ENCODE measurements at regions of chr6 and their contacts with region 1.

Region 1: DNA sequence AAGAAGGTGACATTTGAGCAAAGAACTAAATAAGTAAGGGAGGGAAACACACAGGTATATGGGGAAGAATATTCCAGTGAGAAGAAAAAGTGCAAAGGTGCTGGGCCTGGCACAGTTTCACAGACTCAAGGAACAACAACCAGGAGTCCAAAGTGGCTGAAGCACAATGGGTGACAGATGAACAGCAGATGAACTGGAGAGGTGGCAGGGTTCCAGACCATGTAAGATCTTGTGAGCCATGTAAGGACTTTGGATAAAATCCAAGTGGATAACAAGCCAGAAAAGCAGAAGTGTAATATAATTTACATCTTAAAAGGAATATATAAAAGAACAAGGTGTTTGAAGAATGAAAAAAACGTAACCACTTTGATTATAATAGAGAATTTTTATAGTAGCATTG is 87.9 kb downstream of the MMS22L start:
- DNase-seq: no peak
- ATAC-seq: no peak
- H3K4me3 ChIP-seq: no peak overlapping the region
- H3K27ac ChIP-seq: no peak overlapping the region
- H3K4me1 ChIP-seq: no peaks in the 10 kb centered on the region
- H3K27me3 ChIP-seq: no peaks in the 10 kb centered on the region
- CTCF ChIP-seq: no peak
- POLR2A ChIP-seq: no peak

Region 2: GRCh38 chr6:97040355-97040860 is 154.7 kb before region 1 on chr6:
- intact Hi-C with region 1: no loop called
- DNase-seq: no peak
- ATAC-seq: no peak
- H3K4me3 ChIP-seq: no peak overlapping the region
- H3K27ac ChIP-seq: no peak overlapping the region
- H3K4me1 ChIP-seq: no peaks in the 10 kb centered on the region
- H3K27me3 ChIP-seq: no peaks in the 10 kb centered on the region
- CTCF ChIP-seq: no peak
- POLR2A ChIP-seq: no peak

Region 3: GRCh38 chr6:97312245-97312644 is 117.1 kb after region 1 on chr6:
- intact Hi-C with region 1: no loop called
- DNase-seq: no peak
- ATAC-seq: no peak
- H3K4me3 ChIP-seq: no peak overlapping the region
- H3K27ac ChIP-seq: no peak overlapping the region
- H3K4me1 ChIP-seq: no peaks in the 10 kb centered on the region
- H3K27me3 ChIP-seq: no peaks in the 10 kb centered on the region
- CTCF ChIP-seq: no peak
- POLR2A ChIP-seq: no peak

Region 4: DNA sequence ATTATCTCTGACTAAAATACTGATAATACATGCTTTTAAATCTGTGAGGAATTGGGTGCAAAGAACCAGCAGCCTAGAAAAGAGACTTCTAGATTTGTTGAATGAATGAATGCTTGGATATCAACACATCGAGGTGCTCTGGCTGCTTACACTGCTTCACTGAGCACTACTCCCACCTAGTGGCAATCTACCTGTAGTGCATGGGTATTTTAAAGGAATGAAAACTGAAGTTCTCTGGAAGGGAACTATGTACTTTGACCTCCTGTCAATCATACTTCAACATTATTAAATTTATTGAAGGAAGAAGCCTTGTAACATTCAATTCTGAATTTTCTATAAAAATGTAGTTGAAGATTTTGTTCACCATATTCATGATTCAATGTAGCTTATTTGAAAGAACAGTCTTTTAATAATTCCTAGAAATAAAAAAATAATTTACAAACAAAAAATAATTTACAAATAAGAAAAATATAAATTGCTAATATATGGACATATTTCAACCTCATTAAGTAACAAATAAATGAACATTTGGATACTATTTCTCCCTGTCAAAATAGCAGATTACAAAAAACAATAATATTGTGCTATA is 199.1 kb after region 1 on chr6:
- intact Hi-C with region 1: loop called in 1 of 2 experiments (anchors 10 kb)
- DNase-seq: peak in 1 of 3 donors; percentile 44
- ATAC-seq: peak; percentile 91 to 96 (median 94)
- H3K4me3 ChIP-seq: no peak overlapping the region
- H3K27ac ChIP-seq: no peak overlapping the region
- H3K4me1 ChIP-seq: no peaks in the 10 kb centered on the region
- H3K27me3 ChIP-seq: no peaks in the 10 kb centered on the region
- CTCF ChIP-seq: peak; percentile 90 to 96 (median 91)
- POLR2A ChIP-seq: no peak

Measured in right lobe of liver (tissue), 6 donors.